ENCODE measurements at regions of chr5 and their contacts with region 1.

Region 1: DNA sequence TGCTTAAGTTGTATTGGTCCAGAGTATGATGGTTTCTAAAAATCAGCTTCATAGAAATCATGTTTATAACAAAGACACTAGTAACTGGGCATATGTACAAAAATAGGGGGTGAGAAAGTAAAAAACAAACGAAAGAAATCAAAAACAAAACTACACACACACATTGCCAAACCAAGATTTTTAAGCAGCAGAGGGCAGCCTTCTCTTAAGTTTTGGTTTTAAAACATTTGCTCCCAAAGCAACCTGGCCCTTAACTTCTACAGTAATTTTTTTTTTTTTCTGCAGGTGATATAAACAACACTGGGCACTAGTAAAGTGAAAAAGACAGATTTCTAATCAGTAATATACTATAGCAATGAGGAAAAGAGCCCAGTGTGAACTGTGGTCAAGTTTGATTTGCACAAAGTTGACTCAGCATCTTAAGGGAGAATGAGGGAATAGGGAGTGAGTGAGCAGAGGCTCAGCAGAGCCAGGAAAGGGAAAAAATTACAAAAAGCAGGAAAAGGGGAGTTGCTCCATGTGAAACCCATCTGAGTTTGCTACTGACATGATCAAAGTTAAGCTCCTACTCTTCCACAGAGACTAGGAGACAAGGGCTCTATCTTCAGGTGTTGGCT is 13.4 kb upstream of the GAPT start:
- DNase-seq: no peak
- H3K4me3 ChIP-seq: no peak overlapping the region
- H3K27ac ChIP-seq: no peak overlapping the region
- H3K4me1 ChIP-seq: no peaks in the 10 kb centered on the region
- H3K27me3 ChIP-seq: no peaks in the 10 kb centered on the region
- CTCF ChIP-seq: no peak
- POLR2A ChIP-seq: no peak

Region 2: GRCh38 chr5:57298295-57298984 is 1179.4 kb before region 1 on chr5:
- intact Hi-C with region 1: loop called (anchors 10 kb)
- DNase-seq: peak; percentile 78
- H3K4me3 ChIP-seq: no peak overlapping the region
- H3K27ac ChIP-seq: peak overlapping the region; percentile 50 to 77
- H3K4me1 ChIP-seq: no peaks in the 10 kb centered on the region
- H3K27me3 ChIP-seq: no peaks in the 10 kb centered on the region
- CTCF ChIP-seq: peak; percentile 65 to 81 (median 76)
- POLR2A ChIP-seq: no peak

Region 3: GRCh38 chr5:58523956-58524355 is 46.1 kb after region 1 on chr5:
- intact Hi-C with region 1: no loop called
- DNase-seq: no peak
- H3K4me3 ChIP-seq: no peak overlapping the region
- H3K27ac ChIP-seq: no peak overlapping the region
- H3K4me1 ChIP-seq: no peaks in the 10 kb centered on the region
- H3K27me3 ChIP-seq: no peaks in the 10 kb centered on the region
- CTCF ChIP-seq: no peak
- POLR2A ChIP-seq: no peak

Measured in breast epithelium (tissue), 4 donors.